ENCODE measurements at regions of chr1 and their contacts with region 1.

Region 1: GRCh38 chr1:2163205-2163604 is 31.4 kb downstream of the FAAP20 start:
- DNase-seq: no peak
- H3K4me3 Mint-ChIP-seq: no peak overlapping the region
- H3K27ac Mint-ChIP-seq: no peak overlapping the region
- H3K4me1 Mint-ChIP-seq: peaks cover 6% of the 10 kb centered on the region
- H3K27me3 Mint-ChIP-seq: no peaks in the 10 kb centered on the region

Region 2: DNA sequence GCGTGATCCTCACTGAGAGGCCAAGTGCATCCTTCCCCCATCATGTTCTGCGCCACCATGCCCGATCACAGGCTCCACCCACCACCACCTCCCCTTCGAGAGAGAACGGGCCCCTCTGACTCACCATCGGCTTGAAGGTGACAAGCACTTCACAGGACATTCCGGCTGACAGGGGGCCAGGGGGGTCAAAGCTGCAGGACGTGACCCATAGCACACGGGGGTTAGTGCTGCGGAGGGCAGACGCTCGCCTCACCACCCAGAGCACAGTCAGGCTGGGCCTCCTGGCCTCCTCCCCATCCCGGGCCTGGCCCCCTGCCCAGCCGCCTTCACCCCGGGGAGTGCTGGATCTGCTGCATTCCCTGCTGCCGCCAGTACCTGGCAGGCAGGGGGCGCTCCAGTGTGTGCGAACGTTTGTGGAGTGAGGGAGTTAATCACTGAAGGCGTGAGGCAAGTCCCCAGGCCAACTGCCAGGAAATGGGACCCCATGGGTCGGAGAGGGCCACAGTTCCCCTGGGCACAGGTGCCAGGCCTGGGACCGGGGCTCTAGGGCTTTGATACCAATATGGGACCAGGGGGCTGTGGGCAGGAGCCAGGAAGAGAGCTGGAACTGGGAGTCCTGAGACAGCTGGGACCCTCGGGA is 203.2 kb before region 1 on chr1:
- CTCF ChIA-PET with region 1: no interaction called
- intact Hi-C with region 1: loop called (anchors 10 kb)
- DNase-seq: peak; percentile 88
- H3K4me3 Mint-ChIP-seq: no peak overlapping the region
- H3K27ac Mint-ChIP-seq: no peak overlapping the region
- H3K4me1 Mint-ChIP-seq: peaks cover 8% of the 10 kb centered on the region
- H3K27me3 Mint-ChIP-seq: peaks cover 20% of the 10 kb centered on the region

Region 3: DNA sequence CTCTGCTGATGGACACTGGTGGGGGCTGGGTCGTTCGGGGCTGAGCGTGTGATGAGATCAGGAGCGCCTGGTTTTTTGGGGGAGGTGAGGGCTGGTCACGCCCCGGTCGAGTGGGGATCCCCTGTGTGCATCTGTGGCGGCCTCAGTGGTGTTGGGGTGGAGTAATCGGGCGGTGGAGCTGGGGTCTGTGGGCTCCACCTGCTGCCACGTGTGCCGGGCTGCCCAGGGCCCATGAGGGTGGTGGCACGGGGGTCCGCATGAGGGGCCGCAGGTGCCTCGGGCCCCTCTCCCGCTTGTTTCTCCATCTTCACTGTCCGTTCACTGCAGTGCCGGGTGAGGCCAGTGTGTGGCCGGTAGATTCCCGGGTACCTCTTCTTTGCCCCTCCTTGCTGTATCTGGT is 95.8 kb before region 1 on chr1:
- CTCF ChIA-PET with region 1: no interaction called
- intact Hi-C with region 1: no loop called
- DNase-seq: no peak
- H3K4me3 Mint-ChIP-seq: no peak overlapping the region
- H3K27ac Mint-ChIP-seq: no peak overlapping the region
- H3K4me1 Mint-ChIP-seq: peaks cover 3% of the 10 kb centered on the region
- H3K27me3 Mint-ChIP-seq: no peaks in the 10 kb centered on the region

Region 4: DNA sequence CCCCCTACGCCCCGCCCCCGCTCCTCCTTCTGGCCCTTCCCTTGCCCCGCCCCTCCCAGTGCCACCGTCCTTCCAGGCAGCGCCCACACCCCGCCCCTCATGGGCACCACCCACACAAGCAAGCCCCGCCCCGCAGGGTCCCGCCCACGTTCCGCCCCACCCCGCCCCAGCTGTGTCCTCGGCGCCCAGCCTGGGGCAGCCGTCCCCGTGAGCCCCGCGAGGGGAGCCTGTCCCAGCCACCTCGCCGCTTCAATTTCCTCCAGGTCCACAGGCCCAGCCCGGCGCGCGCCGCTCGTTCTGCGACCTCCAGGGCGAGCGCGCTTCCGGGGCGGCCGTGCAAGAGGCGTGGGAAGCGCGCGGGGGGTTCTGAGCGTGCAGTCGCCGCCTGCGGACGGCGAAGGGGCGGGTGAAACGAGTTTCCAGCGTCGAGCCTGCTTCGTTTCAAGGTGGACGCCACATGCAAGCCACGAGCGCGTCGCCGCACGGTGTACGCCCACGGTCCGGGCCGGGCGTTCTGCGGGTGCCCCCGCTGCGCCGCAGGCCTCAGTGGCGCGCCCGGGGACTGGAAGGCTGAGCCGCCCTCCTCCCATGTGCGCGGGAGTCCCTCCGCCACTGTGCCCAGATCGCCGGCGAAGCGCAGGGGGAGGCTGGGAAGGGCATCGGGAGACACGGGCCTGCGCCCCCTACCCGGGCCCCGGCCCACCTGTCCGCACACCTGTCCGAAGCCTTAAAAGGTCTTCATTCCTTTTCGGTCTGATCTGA is 42.2 kb after region 1 on chr1:
- CTCF ChIA-PET with region 1: no interaction called
- intact Hi-C with region 1: no loop called
- DNase-seq: peak; percentile 96
- H3K4me3 Mint-ChIP-seq: peak overlapping the region; percentile 52
- H3K27ac Mint-ChIP-seq: no peak overlapping the region
- H3K4me1 Mint-ChIP-seq: no peaks in the 10 kb centered on the region
- H3K27me3 Mint-ChIP-seq: no peaks in the 10 kb centered on the region

Region 5: GRCh38 chr1:2255420-2256369 is 92.5 kb after region 1 on chr1:
- CTCF ChIA-PET with region 1: no interaction called
- intact Hi-C with region 1: no loop called
- DNase-seq: peak; percentile 94
- H3K4me3 Mint-ChIP-seq: no peak overlapping the region
- H3K27ac Mint-ChIP-seq: no peak overlapping the region
- H3K4me1 Mint-ChIP-seq: peaks cover 66% of the 10 kb centered on the region
- H3K27me3 Mint-ChIP-seq: no peaks in the 10 kb centered on the region

Region 6: GRCh38 chr1:2494323-2494693 is 331.1 kb after region 1 on chr1:
- CTCF ChIA-PET with region 1: no interaction called
- intact Hi-C with region 1: no loop called
- DNase-seq: no peak
- H3K4me3 Mint-ChIP-seq: no peak overlapping the region
- H3K27ac Mint-ChIP-seq: no peak overlapping the region
- H3K4me1 Mint-ChIP-seq: peaks cover 13% of the 10 kb centered on the region
- H3K27me3 Mint-ChIP-seq: no peaks in the 10 kb centered on the region

Measured in activated naive CD4-positive, alpha-beta T cell treated with anti-CD3 and anti-CD28 coated beads for 36 hours (primary cell).